Activated CD4-positive, alpha-beta memory T cell treated with anti-CD3 and anti-CD28 coated beads, Interleukin-2, amount 10 ng/mL, durations not matched to agents 7 days and 5 days (primary cell): ENCODE measurements at regions of chr6 and their contacts with region 1.

Region 1: GRCh38 chr6:142827369-142827768 is 117.6 kb downstream of the HIVEP2 start:
- DNase-seq: no peak
- H3K4me3 Mint-ChIP-seq: no peak overlapping the region
- H3K27ac Mint-ChIP-seq: no peak overlapping the region
- H3K4me1 Mint-ChIP-seq: peaks cover 25% of the 10 kb centered on the region
- H3K27me3 Mint-ChIP-seq: no peaks in the 10 kb centered on the region

Region 2: DNA sequence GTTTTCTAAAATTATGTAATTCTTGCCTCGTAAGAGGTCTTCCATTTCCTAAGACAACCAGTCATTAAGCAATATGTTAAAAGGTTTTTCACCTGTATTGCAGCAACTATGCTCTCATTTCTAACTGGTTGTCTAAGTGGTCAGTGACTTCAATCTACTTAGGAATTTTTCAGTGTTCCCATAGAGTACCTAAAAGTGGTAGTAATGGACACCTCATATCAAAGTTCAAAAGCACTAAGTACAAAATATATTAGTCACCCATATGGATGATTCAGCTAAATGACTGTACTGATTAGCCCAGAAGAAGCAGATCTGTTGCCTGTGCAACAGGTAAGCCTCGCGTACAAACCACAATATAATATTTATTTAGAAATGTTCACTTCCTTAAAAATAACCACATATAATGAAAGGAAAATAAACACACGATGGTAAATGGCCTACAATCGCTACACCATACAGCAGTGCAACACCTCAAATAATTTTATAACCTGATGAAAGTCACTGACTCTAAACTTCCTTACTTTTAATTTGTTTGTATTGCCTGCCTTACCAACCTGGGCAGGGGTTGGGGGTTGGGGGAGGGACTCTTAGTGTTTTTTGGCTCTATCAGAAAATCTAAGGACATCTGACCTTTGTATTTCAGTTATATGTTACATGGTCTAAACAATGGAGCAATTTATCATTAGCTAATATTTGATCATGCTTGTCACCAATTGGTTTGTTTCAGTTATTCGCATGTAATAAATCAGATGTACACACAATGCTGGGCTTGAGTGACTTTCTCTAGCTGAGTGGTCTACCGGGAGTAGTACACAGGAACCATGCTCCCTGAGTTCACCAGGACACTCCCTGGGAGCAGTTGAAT is 11.7 kb after region 1 on chr6:
- CTCF ChIA-PET with region 1: interaction called, 9 read pairs
- POLR2A ChIA-PET with region 1: interaction called, 18 read pairs
- DNase-seq: no peak
- H3K4me3 Mint-ChIP-seq: no peak overlapping the region
- H3K27ac Mint-ChIP-seq: peak overlapping the region; percentile 10
- H3K4me1 Mint-ChIP-seq: peaks cover 60% of the 10 kb centered on the region
- H3K27me3 Mint-ChIP-seq: no peaks in the 10 kb centered on the region

Region 3: DNA sequence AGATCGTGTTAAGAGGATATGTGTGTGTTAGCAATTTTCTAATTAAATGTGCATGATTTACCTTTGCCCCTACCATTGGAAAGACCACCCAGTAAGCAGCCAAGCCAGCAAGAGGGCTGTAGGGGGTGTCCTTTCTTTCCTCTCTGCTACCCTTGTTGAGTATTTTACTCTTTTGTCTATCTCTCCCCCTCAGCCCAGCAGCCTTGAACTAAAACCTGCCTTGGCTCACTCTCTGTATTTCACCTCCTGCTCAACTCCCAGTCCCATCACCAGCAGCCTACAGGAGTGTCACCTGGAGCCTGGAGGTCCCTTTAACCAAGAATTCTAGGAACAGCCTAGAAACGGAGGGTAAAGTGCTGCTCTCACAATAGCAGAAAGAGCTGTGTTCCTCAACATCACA is 36.6 kb after region 1 on chr6:
- CTCF ChIA-PET with region 1: no interaction called
- POLR2A ChIA-PET with region 1: no interaction called
- DNase-seq: no peak
- H3K4me3 Mint-ChIP-seq: no peak overlapping the region
- H3K27ac Mint-ChIP-seq: no peak overlapping the region
- H3K4me1 Mint-ChIP-seq: peaks cover 50% of the 10 kb centered on the region
- H3K27me3 Mint-ChIP-seq: no peaks in the 10 kb centered on the region